Activated CD4-positive, alpha-beta T cell treated with anti-CD3 and anti-CD28 coated beads for 36 hours (primary cell): ENCODE measurements at regions of chr1 and their contacts with region 1.

Region 1: GRCh38 chr1:180571832-180572636 is 13.3 kb downstream of the OVAAL start:
- DNase-seq: peak; percentile 78
- ATAC-seq: peak; percentile 93
- H3K4me3 Mint-ChIP-seq: no peak overlapping the region
- H3K27ac Mint-ChIP-seq: peak overlapping the region; percentile 71
- H3K4me1 Mint-ChIP-seq: peaks cover 23% of the 10 kb centered on the region
- H3K27me3 Mint-ChIP-seq: peaks cover 12% of the 10 kb centered on the region

Region 2: GRCh38 chr1:180027949-180028445 is 544.0 kb before region 1 on chr1:
- CTCF ChIA-PET with region 1: no interaction called
- POLR2A ChIA-PET with region 1: no interaction called
- intact Hi-C with region 1: no loop called
- DNase-seq: no peak
- ATAC-seq: no peak
- H3K4me3 Mint-ChIP-seq: no peak overlapping the region
- H3K27ac Mint-ChIP-seq: no peak overlapping the region
- H3K4me1 Mint-ChIP-seq: peaks cover 5% of the 10 kb centered on the region
- H3K27me3 Mint-ChIP-seq: no peaks in the 10 kb centered on the region

Region 3: DNA sequence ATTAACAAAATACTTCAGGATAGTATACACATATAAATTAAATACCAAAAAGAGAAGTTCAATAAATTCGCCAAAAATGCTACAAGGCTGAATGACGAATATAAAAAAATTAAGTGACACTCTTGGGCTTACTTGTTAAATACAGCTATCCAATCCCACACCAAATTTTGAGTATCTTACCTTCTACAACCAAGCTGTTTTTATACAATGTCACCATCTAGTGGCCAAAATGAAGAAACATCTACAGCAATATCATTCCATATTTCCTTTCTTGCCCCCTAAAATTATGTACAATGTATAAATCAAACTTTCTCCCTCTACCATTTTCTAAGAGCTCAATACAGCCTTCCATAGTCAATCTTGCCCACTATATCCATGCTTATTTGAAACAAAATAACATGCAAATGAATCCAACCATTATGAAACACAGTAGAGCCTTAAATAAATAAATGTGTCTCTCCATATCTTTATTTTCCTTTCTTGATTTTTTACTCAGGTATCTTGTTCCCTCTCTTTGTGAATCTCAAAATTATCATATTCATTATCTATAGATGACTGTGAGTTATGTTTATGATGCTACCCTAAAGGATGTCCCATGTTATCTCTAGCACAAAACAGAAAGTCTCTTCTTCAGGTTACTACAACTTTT is 155.9 kb before region 1 on chr1:
- CTCF ChIA-PET with region 1: no interaction called
- POLR2A ChIA-PET with region 1: no interaction called
- intact Hi-C with region 1: no loop called
- DNase-seq: no peak
- ATAC-seq: no peak
- H3K4me3 Mint-ChIP-seq: no peak overlapping the region
- H3K27ac Mint-ChIP-seq: no peak overlapping the region
- H3K4me1 Mint-ChIP-seq: no peaks in the 10 kb centered on the region
- H3K27me3 Mint-ChIP-seq: no peaks in the 10 kb centered on the region

Region 4: DNA sequence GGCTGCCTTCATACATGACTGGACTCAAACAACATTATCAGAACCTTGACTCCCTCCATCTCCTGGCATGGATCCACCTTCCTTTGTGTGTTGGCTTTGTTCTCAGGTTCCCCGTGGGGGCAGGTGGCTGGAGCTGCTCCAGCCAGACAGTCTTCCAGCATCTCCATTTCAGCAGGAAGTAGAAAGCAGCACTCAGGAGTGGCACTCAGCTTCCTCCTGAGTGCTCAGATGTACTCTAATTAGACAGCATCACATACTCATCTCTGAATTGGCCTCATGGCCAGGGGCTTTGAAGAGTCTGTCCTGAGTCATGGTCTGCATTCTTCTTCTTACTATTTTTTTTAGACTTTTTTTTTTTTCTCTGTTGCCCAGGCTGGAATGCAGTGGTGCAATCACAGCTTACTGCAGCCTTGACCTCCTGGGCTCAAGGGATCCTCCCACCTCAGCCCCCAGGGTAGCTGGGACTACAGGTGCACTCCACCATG is 14.7 kb after region 1 on chr1:
- CTCF ChIA-PET with region 1: no interaction called
- POLR2A ChIA-PET with region 1: interaction called, 3 read pairs
- intact Hi-C with region 1: loop called (anchors 1 kb)
- DNase-seq: peak; percentile 27
- ATAC-seq: peak; percentile 77
- H3K4me3 Mint-ChIP-seq: no peak overlapping the region
- H3K27ac Mint-ChIP-seq: peak overlapping the region; percentile 83
- H3K4me1 Mint-ChIP-seq: peaks cover 18% of the 10 kb centered on the region
- H3K27me3 Mint-ChIP-seq: peaks cover 6% of the 10 kb centered on the region

Region 5: GRCh38 chr1:181390410-181391077 is 818.5 kb after region 1 on chr1:
- CTCF ChIA-PET with region 1: no interaction called
- POLR2A ChIA-PET with region 1: no interaction called
- intact Hi-C with region 1: loop called in 1 of 2 experiments (anchors 5 kb)
- DNase-seq: no peak
- ATAC-seq: no peak
- H3K4me3 Mint-ChIP-seq: no peak overlapping the region
- H3K27ac Mint-ChIP-seq: no peak overlapping the region
- H3K4me1 Mint-ChIP-seq: peaks cover 9% of the 10 kb centered on the region
- H3K27me3 Mint-ChIP-seq: no peaks in the 10 kb centered on the region